Activated CD4-positive, alpha-beta T cell treated with anti-CD3 and anti-CD28 coated beads for 36 hours (primary cell): ENCODE measurements at regions of chr1 and their contacts with region 1.

Region 1: GRCh38 chr1:160006312-160006940 is 25.4 kb downstream of the PIGM start:
- DNase-seq: peak; percentile 88
- ATAC-seq: peak; percentile 90
- H3K4me3 Mint-ChIP-seq: no peak overlapping the region
- H3K27ac Mint-ChIP-seq: no peak overlapping the region
- H3K4me1 Mint-ChIP-seq: no peaks in the 10 kb centered on the region
- H3K27me3 Mint-ChIP-seq: peaks cover 11% of the 10 kb centered on the region

Region 2: DNA sequence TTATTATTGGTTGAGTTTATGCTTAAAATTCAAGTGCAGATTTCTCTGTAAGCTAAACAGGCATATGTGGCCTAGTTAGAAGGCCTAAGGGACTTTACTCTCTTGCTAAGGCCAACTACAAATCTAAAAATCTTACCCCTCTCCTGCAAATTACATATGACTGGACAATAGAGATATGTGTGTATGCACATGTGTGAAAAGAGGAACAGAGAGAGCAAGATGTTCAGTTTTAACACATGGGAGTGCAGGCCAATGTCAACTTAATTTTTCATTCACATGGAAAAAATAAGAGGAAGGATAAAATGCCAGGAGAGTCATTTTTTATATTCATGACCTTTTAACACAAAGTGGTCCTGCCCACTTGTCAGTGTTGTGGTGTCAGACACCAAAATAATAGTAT is 1588.8 kb before region 1 on chr1:
- CTCF ChIA-PET with region 1: no interaction called
- POLR2A ChIA-PET with region 1: no interaction called
- intact Hi-C with region 1: no loop called
- DNase-seq: no peak
- ATAC-seq: no peak
- H3K4me3 Mint-ChIP-seq: no peak overlapping the region
- H3K27ac Mint-ChIP-seq: no peak overlapping the region
- H3K4me1 Mint-ChIP-seq: no peaks in the 10 kb centered on the region
- H3K27me3 Mint-ChIP-seq: peaks cover 2% of the 10 kb centered on the region

Region 3: DNA sequence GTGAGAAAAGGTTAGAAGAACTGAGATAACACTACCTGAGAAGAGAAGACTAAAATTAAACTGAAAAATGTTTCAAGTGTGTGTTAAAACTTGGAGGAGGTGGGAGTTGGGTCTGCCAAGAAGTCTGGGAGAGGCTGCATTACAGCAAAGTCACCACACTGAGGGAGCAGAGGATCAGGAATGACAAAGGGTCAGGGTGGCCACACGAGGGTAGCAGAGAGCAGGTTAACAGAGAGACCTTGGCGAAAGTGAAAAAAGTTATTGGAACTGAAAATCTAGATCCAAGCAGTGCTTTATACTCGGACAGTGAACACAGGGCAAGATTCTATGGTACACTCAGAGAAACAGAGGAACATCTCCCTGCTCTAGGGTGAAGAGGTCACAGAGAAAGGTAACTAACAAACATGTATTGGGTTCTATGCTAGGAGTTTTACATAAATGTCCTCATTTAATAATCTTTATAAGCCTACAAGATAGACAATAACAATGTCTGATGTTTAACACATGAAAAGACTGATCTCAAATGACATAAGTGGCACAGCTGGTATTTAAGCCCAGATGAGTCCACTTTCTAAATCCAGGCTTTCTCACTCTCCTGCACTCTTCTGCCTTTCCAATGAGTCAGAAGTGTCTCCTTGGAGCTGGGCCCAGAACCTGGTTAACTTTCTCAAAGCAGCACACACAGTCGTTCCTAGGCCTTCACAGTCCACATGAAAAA is 845.3 kb before region 1 on chr1:
- CTCF ChIA-PET with region 1: no interaction called
- POLR2A ChIA-PET with region 1: no interaction called
- intact Hi-C with region 1: loop called in 1 of 2 experiments (anchors 2 kb)
- DNase-seq: peak; percentile 82
- ATAC-seq: peak; percentile 83
- H3K4me3 Mint-ChIP-seq: no peak overlapping the region
- H3K27ac Mint-ChIP-seq: no peak overlapping the region
- H3K4me1 Mint-ChIP-seq: peaks cover 2% of the 10 kb centered on the region
- H3K27me3 Mint-ChIP-seq: peaks cover 39% of the 10 kb centered on the region

Region 4: DNA sequence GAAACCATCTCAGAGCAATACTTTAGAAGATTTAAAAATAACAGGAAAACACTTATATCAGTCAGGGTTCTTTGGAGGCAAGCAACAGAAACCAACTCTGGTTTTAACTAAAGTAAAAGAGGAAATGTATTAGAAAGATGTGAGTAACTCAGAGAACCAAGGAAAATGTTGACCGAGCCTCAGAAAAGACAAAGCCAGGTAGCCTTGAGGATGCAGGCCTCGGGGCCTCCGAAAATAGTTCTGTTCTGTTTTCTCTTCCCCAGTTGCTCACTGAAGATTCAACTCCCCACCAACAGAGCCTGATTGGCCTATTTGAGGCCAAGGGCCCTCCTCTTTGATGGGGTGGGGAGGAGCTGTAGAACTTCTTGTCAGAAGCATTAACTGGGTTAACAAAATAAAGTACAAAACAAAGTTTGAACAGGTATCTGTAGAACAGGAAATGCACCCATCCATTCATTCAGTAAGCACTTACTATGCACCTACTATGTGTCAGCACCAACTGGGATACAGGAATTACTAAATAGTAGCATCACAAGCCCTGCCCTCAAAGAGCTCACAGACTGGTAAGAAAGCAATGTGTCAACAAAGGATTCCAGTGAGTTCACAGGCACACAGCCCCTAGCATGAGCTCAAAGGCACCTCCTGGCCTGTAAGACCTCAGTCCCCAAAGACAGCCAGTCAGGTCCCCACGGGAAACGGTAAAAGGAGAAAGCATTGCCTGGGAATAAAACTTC is 167.1 kb before region 1 on chr1:
- CTCF ChIA-PET with region 1: no interaction called
- POLR2A ChIA-PET with region 1: no interaction called
- intact Hi-C with region 1: no loop called
- DNase-seq: no peak
- ATAC-seq: peak; percentile 58
- H3K4me3 Mint-ChIP-seq: no peak overlapping the region
- H3K27ac Mint-ChIP-seq: peak overlapping the region; percentile 44
- H3K4me1 Mint-ChIP-seq: peaks cover 14% of the 10 kb centered on the region
- H3K27me3 Mint-ChIP-seq: no peaks in the 10 kb centered on the region

Region 5: GRCh38 chr1:159854693-159855192 is 151.7 kb before region 1 on chr1:
- CTCF ChIA-PET with region 1: interaction called, 17 read pairs
- POLR2A ChIA-PET with region 1: no interaction called
- intact Hi-C with region 1: no loop called
- DNase-seq: peak; percentile 87
- ATAC-seq: peak; percentile 96
- H3K4me3 Mint-ChIP-seq: peak overlapping the region; percentile 75
- H3K27ac Mint-ChIP-seq: peak overlapping the region; percentile 58
- H3K4me1 Mint-ChIP-seq: peaks cover 10% of the 10 kb centered on the region
- H3K27me3 Mint-ChIP-seq: no peaks in the 10 kb centered on the region

Region 6: GRCh38 chr1:159936273-159936904 is 70.0 kb before region 1 on chr1:
- CTCF ChIA-PET with region 1: interaction called, 237 read pairs
- POLR2A ChIA-PET with region 1: no interaction called
- intact Hi-C with region 1: loop called (anchors 1 kb)
- DNase-seq: peak; percentile 90
- ATAC-seq: peak; percentile 89
- H3K4me3 Mint-ChIP-seq: no peak overlapping the region
- H3K27ac Mint-ChIP-seq: no peak overlapping the region
- H3K4me1 Mint-ChIP-seq: peaks cover 5% of the 10 kb centered on the region
- H3K27me3 Mint-ChIP-seq: peaks cover 4% of the 10 kb centered on the region

Region 7: DNA sequence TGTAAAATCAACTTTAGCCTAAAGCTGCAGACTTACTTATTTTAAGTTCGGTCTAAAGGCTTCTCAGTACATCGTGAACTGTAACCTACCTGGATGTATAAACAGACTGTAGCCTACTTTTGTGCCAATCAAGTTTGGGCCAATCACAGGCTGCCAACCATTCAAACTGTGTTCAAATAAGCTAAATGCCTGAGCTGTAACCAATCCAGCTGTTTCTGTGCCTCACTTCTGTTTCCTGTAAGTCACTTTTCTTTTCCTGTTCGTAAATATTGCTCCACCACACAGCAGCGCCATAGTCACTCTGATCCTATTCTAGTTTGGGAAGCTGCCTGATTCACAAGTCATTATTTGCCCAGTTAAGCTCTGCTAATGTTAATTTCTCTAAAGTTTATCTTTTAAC is 14.9 kb before region 1 on chr1:
- CTCF ChIA-PET with region 1: interaction called, 33 read pairs
- POLR2A ChIA-PET with region 1: no interaction called
- intact Hi-C with region 1: no loop called
- DNase-seq: peak; percentile 44
- ATAC-seq: peak; percentile 83
- H3K4me3 Mint-ChIP-seq: no peak overlapping the region
- H3K27ac Mint-ChIP-seq: peak overlapping the region; percentile 35
- H3K4me1 Mint-ChIP-seq: peaks cover 7% of the 10 kb centered on the region
- H3K27me3 Mint-ChIP-seq: peaks cover 10% of the 10 kb centered on the region

Region 8: GRCh38 chr1:160031365-160032164 is 25.1 kb after region 1 on chr1 and contains the start of gene PIGM:
- CTCF ChIA-PET with region 1: interaction called, 31 read pairs
- POLR2A ChIA-PET with region 1: interaction called, 6 read pairs
- intact Hi-C with region 1: no loop called
- DNase-seq: peak; percentile 97
- ATAC-seq: peak; percentile 96
- H3K4me3 Mint-ChIP-seq: peak within 1 kb of the TSS; percentile 96
- H3K27ac Mint-ChIP-seq: peak within 1 kb of the TSS; percentile 92
- H3K4me1 Mint-ChIP-seq: peaks cover 34% of the 10 kb centered on the region
- H3K27me3 Mint-ChIP-seq: no peaks in the 10 kb centered on the region
- total RNA-seq, gene PIGM: 4.3 to 4.7 TPM